Ovary (tissue), 10 donors: ENCODE measurements at regions of chr12 and their contacts with region 1.

Region 1: DNA sequence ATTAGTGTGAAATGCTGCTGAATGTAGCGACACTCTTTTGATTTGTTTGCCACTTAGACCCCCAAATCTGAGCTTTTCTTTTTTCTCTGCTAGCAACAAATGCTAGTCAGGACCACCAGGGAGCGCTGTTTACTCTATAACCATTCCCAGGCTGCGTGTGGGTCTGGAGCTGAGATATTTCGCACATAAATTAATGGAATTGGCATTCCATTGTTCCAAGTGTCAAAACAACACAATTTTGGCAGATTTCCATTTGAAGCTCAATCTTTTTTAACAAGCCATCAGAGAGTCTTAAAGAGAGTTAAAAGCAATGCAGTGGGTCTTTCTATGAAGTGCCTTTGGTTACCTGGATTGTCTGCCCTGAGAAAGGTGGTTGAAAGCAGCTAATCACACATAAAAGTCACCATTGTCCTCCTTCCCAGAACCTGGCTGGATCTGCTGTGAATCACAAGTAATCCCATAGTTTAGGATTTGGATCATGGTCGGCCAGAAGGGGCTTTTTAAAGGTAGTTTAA is 7.4 kb upstream of the TMEM132C start:
- DNase-seq: peak; percentile 21 to 47 (median 36)
- H3K4me3 ChIP-seq: no peak overlapping the region
- H3K27ac ChIP-seq: no peak overlapping the region
- H3K4me1 ChIP-seq: no peaks in the 10 kb centered on the region
- H3K27me3 ChIP-seq: no peaks in the 10 kb centered on the region
- CTCF ChIP-seq: peak; percentile 14 to 79 (median 30)
- EP300 ChIP-seq: no peak
- POLR2A ChIP-seq: no peak

Region 2: GRCh38 chr12:127655691-127656090 is 603.9 kb before region 1 on chr12:
- intact Hi-C with region 1: no loop called
- DNase-seq: no peak
- H3K4me3 ChIP-seq: no peak overlapping the region
- H3K27ac ChIP-seq: no peak overlapping the region
- H3K4me1 ChIP-seq: no peaks in the 10 kb centered on the region
- H3K27me3 ChIP-seq: no peaks in the 10 kb centered on the region
- CTCF ChIP-seq: no peak
- EP300 ChIP-seq: no peak
- POLR2A ChIP-seq: no peak

Region 3: DNA sequence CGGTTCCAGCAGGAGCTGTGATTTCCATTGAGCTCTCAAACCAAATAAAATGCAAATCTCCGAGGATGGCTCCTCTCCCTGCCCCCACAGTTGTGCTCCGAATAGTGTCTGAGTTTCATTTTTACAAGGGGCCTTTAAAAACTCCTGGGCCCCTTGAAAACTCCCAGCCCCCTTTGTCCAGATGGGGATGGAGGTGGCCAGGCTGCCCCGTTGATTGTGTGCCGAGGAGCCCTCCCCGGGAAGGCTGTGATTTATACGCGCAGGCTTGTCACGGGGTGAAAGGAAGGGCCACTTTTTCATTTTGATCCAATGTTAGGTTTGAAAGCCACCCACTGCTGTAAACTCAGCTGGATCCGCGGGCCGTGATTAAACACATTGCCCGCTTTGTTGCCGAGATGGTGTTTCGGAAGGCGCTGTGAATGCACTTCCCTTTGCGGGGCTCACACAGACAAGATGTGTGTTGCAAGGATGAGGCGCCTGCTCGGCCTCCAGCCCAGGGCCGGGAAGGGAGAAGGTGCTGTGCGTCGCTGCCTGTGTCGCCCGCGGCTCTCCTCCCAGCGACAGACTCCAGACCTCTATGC is 106.1 kb after region 1 on chr12:
- intact Hi-C with region 1: loop called in 1 of 4 experiments (anchors 10 kb)
- DNase-seq: peak in 2 of 5 donors; percentile 28 to 44
- H3K4me3 ChIP-seq: peak overlapping the region; percentile 29
- H3K27ac ChIP-seq: no peak overlapping the region
- H3K4me1 ChIP-seq: no peaks in the 10 kb centered on the region
- H3K27me3 ChIP-seq: no peaks in the 10 kb centered on the region
- CTCF ChIP-seq: no peak
- EP300 ChIP-seq: no peak
- POLR2A ChIP-seq: no peak

Region 4: GRCh38 chr12:128402486-128403243 is 143.1 kb after region 1 on chr12:
- intact Hi-C with region 1: no loop called
- DNase-seq: no peak
- H3K4me3 ChIP-seq: no peak overlapping the region
- H3K27ac ChIP-seq: no peak overlapping the region
- H3K4me1 ChIP-seq: no peaks in the 10 kb centered on the region
- H3K27me3 ChIP-seq: no peaks in the 10 kb centered on the region
- CTCF ChIP-seq: no peak
- EP300 ChIP-seq: no peak
- POLR2A ChIP-seq: no peak